Activated B cell treated with CpG ODN at 0.5 μM for 24 hours (primary cell): ENCODE measurements at regions of chr9 and their contacts with region 1.

Region 1: DNA sequence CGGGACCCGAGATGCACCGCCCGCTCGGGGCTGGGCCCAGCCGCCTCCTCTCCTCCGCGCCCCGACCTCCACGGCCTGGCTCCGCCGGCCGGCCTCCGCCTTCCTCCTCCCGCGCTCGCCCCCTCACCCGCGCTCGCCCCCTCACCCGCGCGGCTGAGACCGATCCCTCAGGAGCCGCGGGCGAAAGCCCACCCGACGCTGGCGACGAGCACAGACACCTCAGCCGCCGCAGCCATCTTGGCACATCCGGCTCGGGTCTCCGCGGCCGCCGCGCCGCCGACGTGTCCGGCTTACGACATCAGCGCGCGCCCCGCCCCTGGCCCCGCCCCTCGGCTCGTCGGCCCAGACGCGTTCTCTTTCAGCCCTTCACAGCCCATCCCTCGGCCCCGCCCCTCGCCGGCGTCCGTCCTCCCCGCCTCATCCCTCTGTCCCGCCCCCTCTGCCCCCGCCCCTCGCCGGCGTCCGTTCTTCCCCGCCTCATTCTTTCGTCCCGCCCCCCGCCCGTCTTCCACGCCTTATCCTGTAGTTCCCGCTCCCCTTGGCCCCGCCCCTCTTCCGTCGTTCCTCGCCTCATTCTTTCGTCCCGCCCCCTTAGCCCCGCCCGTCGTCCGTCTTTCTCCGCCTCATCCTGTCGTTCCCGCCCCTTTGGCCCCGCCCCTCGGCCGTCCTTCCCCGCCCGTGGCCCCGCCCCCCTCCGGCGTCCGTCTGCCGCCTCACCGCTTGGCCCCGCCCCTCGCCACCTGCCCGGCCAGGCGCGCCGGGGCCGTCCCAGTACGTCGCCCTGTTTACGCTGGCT is at the start of gene SEC16A:
- DNase-seq: peak; percentile 99
- ATAC-seq: peak; percentile 78
- H3K4me3 Mint-ChIP-seq: peak within 1 kb of the TSS; percentile 98
- H3K27ac Mint-ChIP-seq: peak within 1 kb of the TSS; percentile 97
- H3K4me1 Mint-ChIP-seq: peaks cover 34% of the 10 kb centered on the region
- H3K27me3 Mint-ChIP-seq: no peaks in the 10 kb centered on the region
- CTCF ChIP-seq: no peak
- total RNA-seq, gene SEC16A: 74.0 and 78.8 TPM in 2 replicates

Region 2: GRCh38 chr9:135907431-135908092 is 575.4 kb before region 1 on chr9 and contains the start of gene CAMSAP1:
- CTCF ChIA-PET with region 1: no interaction called
- POLR2A ChIA-PET with region 1: no interaction called
- intact Hi-C with region 1: loop called (anchors 5 kb)
- DNase-seq: peak; percentile 94
- ATAC-seq: peak; percentile 90
- H3K4me3 Mint-ChIP-seq: peak within 1 kb of the TSS; percentile 78
- H3K27ac Mint-ChIP-seq: peak within 1 kb of the TSS; percentile 69
- H3K4me1 Mint-ChIP-seq: peaks cover 44% of the 10 kb centered on the region
- H3K27me3 Mint-ChIP-seq: no peaks in the 10 kb centered on the region
- CTCF ChIP-seq: no peak
- total RNA-seq, gene CAMSAP1: 16.9 and 23.7 TPM in 2 replicates

Region 3: DNA sequence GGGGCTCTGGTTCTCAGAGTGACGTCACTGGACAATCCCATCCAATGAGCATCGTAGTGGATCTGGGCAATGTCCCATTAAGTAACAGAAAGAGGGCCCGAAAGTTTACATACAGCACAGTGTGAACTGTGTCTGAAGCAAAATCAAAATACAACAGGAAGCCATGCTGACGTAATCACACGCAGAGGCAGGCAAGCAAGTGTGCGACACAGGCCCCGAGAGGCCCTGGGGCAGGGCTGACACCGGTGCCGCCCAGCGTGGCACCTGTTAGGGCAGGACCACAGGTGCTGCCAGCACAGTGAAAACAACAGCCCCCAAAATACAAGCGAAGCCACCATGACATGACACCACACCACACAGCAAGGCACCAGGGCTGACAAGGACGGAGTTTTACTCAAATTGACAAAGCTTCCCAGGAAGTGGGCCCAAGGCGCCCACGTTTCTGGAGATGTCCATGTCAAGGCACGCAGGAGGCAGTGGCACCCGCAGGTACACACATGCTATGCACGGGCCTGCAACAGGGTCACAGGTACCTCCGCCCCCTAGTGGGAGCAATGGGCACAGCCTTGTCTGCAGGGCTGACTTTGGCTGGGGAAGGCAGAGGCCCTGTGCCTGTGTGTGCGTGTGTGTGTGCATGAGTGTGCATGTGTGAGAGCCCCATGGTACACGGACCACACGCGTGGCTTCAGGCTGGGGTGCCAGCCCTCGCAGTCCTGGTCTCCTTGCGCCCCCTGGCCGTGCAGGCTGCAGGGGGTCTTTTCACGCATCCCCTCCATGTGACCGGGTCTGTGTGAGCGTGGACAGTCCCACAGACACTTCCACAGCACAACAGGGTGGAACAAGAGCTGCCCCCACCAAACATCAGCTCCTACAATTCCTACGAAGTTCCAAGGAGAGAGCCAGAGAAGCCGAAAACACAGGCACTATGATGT is 257.0 kb before region 1 on chr9:
- CTCF ChIA-PET with region 1: no interaction called
- POLR2A ChIA-PET with region 1: no interaction called
- intact Hi-C with region 1: loop called (anchors 5 kb)
- DNase-seq: peak; percentile 70
- ATAC-seq: peak; percentile 78
- H3K4me3 Mint-ChIP-seq: peak overlapping the region; percentile 79
- H3K27ac Mint-ChIP-seq: peak overlapping the region; percentile 98
- H3K4me1 Mint-ChIP-seq: peaks cover 80% of the 10 kb centered on the region
- H3K27me3 Mint-ChIP-seq: no peaks in the 10 kb centered on the region
- CTCF ChIP-seq: peak; percentile 30

Region 4: DNA sequence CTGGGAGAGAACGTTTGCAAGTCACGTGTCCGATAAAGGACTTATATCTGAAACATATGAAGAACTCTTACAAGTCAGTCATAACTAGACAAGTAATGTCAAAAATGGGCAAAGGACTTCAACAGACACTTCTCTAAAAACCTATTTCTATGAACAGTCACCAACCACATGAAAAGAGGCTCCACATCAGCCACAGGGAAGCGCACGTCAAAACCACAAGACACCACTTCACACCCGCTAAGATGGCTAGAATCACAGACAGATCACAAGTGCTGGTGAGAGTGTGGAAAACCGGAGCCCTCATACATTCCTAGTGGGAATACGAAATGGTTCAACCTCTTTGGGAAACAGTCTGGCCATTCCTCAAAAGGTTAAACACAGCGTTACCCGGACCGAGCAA is 98.0 kb before region 1 on chr9:
- CTCF ChIA-PET with region 1: no interaction called
- POLR2A ChIA-PET with region 1: no interaction called
- intact Hi-C with region 1: no loop called
- DNase-seq: no peak
- ATAC-seq: no peak
- H3K4me3 Mint-ChIP-seq: no peak overlapping the region
- H3K27ac Mint-ChIP-seq: no peak overlapping the region
- H3K4me1 Mint-ChIP-seq: no peaks in the 10 kb centered on the region
- H3K27me3 Mint-ChIP-seq: no peaks in the 10 kb centered on the region
- CTCF ChIP-seq: no peak

Region 5: GRCh38 chr9:136410500-136411287 is 72.3 kb before region 1 on chr9 and contains the starts of genes ENTR1 and PMPCA:
- CTCF ChIA-PET with region 1: no interaction called
- POLR2A ChIA-PET with region 1: interaction called, 3 read pairs
- intact Hi-C with region 1: loop called (anchors 2 kb)
- DNase-seq: peak; percentile 98
- ATAC-seq: peak; percentile 87
- H3K4me3 Mint-ChIP-seq: peak within 1 kb of the TSS; percentile 92
- H3K27ac Mint-ChIP-seq: peak within 1 kb of the TSS; percentile 90
- H3K4me1 Mint-ChIP-seq: peaks cover 41% of the 10 kb centered on the region
- H3K27me3 Mint-ChIP-seq: no peaks in the 10 kb centered on the region
- CTCF ChIP-seq: no peak
- total RNA-seq, gene ENTR1: 89.4 and 101 TPM in 2 replicates
- total RNA-seq, gene PMPCA: 67.2 and 75.3 TPM in 2 replicates

Region 6: GRCh38 chr9:136512651-136513071 is 29.7 kb after region 1 on chr9:
- CTCF ChIA-PET with region 1: no interaction called
- POLR2A ChIA-PET with region 1: no interaction called
- intact Hi-C with region 1: no loop called
- DNase-seq: no peak
- ATAC-seq: peak; percentile 80
- H3K4me3 Mint-ChIP-seq: no peak overlapping the region
- H3K27ac Mint-ChIP-seq: no peak overlapping the region
- H3K4me1 Mint-ChIP-seq: no peaks in the 10 kb centered on the region
- H3K27me3 Mint-ChIP-seq: no peaks in the 10 kb centered on the region
- CTCF ChIP-seq: no peak

Region 7: GRCh38 chr9:136545966-136546698 is 63.1 kb after region 1 on chr9 and contains the start of gene NOTCH1:
- CTCF ChIA-PET with region 1: no interaction called
- POLR2A ChIA-PET with region 1: interaction called, 7 read pairs
- intact Hi-C with region 1: loop called (anchors 1 kb)
- DNase-seq: peak; percentile 84
- ATAC-seq: peak; percentile 76
- H3K4me3 Mint-ChIP-seq: peak within 1 kb of the TSS; percentile 87
- H3K27ac Mint-ChIP-seq: peak within 1 kb of the TSS; percentile 90
- H3K4me1 Mint-ChIP-seq: peaks cover 39% of the 10 kb centered on the region
- H3K27me3 Mint-ChIP-seq: no peaks in the 10 kb centered on the region
- CTCF ChIP-seq: no peak
- total RNA-seq, gene NOTCH1: 24.9 and 26.6 TPM in 2 replicates

Region 8: DNA sequence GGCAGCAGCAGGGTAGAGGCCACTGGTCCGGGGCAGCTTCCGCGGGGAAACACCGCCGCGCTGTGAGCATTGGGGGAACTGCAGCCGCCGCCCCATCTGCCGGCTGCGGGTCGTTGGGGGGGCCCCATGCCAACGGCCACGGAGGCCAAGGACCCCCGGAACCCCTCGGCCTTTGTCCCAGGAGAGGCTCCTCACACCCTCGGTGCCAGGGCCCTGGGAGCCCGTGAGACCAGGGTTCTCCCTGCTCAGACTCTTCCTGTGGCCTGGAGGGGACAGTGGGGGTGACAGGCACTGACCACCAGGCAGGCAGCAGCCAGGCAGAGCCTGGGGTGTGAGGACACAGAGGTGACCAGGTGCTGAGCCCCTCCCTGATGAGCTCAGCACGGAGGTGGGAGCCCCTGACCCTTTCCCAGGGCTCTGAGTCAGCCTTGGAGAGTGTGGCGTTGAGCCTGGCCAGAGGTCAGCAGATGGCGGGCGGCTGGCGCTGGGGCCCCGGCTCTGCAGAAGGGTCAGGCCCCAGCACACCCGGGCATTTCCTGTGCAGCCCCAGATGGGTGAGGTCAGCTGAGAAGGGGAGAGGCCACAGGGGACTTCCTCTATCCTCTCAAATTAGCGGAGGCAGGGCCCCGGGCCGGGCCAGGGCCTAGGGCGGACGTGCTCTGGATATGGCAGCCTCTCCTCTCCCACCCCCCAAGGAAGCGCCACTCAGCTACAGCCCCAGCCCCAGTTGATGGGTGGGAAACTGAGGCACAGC is 161.8 kb after region 1 on chr9:
- CTCF ChIA-PET with region 1: interaction called, 6 read pairs
- POLR2A ChIA-PET with region 1: no interaction called
- intact Hi-C with region 1: loop called (anchors 1 kb)
- DNase-seq: peak; percentile 70
- ATAC-seq: peak; percentile 97
- H3K4me3 Mint-ChIP-seq: no peak overlapping the region
- H3K27ac Mint-ChIP-seq: no peak overlapping the region
- H3K4me1 Mint-ChIP-seq: peaks cover 25% of the 10 kb centered on the region
- H3K27me3 Mint-ChIP-seq: peaks cover 20% of the 10 kb centered on the region
- CTCF ChIP-seq: peak; percentile 24